ENCODE measurements at regions of chr3 and their contacts with region 1.

Region 1: DNA sequence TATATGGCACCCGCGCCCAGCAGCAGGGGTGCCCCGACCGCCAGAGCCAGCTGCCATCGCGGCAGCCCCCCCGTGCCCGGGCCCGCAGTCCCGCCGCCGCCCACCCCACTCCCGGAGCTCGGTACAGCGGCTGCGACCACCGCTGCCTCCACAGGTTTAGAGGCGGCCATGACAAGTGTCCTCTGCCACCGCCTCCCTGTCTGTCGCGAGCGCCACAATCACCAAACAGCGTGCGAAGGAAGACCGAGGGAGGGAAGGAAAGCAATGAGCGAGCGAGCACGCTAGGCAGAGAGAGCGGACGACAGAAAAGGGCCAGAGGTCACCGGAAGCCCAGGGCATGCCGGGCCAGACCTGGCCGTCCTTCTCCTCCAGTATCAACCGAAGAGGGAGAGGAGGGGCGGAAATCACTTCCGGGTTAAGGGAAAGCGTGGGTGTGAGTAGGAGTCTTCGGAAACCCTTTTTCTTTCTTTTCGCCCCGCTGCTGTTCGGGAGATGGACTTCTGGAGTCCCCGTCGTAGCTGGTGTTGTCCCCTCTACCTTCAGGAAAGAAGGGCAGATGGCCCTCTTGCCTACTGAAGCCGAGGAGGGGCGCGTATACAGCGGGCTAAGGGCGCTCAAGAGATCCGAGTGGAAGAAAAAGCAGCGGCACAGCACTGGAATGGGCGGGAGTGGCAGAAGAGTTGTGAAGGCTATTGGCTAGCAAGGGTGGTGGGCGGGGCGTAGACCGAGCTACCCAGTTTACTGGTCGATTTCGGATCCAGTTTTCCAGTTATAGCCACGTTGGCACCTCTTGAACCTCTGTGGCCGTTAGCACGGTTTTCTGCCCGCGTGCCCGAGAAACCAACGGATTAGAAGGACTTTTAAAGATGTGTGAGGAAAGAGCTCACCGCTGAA is at the starts of genes LNP1 and TOMM70:
- DNase-seq: peak; percentile 98 to 99
- ATAC-seq: peak; percentile 99
- H3K4me3 ChIP-seq: peak within 1 kb of the TSS; percentile 92 to 96
- H3K27ac ChIP-seq: peak within 1 kb of the TSS; percentile 34 to 92
- H3K4me1 ChIP-seq: no peaks in the 10 kb centered on the region
- H3K27me3 ChIP-seq: no peaks in the 10 kb centered on the region
- total RNA-seq, gene LNP1: 2.8 to 5.1 TPM
- total RNA-seq, gene TOMM70: 30.8 to 33.9 TPM

Region 2: GRCh38 chr3:98593046-98593936 is 1807.7 kb before region 1 on chr3 and contains the start of gene CPOX:
- intact Hi-C with region 1: loop called in 1 of 2 experiments (anchors 10 kb)
- DNase-seq: peak; percentile 95 to 96
- ATAC-seq: peak; percentile 97
- H3K4me3 ChIP-seq: peak within 1 kb of the TSS; percentile 70 to 90
- H3K27ac ChIP-seq: peak within 1 kb of the TSS; percentile 2 to 19
- H3K4me1 ChIP-seq: no peaks in the 10 kb centered on the region
- H3K27me3 ChIP-seq: no peaks in the 10 kb centered on the region
- total RNA-seq, gene CPOX: 10.8 to 19.4 TPM

Region 3: DNA sequence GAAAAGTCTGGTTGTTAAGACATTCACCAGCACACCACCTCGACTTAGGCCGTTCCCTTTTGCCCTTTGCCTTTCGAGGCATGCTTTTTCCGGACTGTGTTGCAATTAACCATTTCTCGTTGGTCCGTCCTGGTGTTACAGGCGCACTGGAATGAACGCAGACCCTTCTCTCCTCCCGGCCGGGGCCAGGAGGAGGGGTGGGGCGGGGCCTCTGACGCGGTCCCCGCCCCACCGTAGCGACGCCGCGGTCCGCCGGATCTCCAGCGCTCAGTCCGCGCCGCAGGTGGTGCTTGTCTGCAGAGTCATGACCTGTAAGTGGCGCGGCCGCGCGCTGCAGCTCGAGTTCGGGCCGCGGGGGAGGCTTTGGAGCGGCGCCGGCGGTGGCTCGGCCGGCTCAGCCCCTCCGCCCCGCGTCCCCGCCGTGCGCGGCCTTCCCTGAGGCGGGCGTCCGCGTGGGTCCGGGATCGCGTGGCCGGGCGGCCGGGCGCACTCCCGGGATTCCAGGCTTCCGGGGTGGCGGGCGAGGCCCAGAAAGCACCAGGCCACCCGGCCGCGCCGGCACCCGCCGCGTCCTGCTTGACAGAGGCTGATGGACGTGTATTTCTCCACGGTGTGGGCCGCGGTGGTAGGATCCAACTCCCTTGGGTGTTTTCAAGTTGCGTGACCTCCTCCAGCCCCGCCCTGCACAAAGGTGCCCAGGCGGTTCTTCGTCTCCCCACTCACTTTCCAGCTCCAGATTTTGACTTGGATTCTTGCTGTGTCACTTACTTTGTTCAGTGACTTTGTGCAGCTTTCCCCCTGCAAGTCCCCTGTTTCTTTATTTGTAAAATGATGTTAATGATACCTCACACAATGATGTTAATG is 66.3 kb before region 1 on chr3 and contains the start of gene NIT2:
- intact Hi-C with region 1: loop called in 1 of 2 experiments (anchors 10 kb)
- DNase-seq: peak; percentile 88 to 95
- ATAC-seq: peak; percentile 96
- H3K4me3 ChIP-seq: peak within 1 kb of the TSS; percentile 61 to 79
- H3K27ac ChIP-seq: peak within 1 kb of the TSS; percentile 14 to 77
- H3K4me1 ChIP-seq: no peaks in the 10 kb centered on the region
- H3K27me3 ChIP-seq: no peaks in the 10 kb centered on the region
- total RNA-seq, gene NIT2: 33.7 to 34.0 TPM

Region 4: DNA sequence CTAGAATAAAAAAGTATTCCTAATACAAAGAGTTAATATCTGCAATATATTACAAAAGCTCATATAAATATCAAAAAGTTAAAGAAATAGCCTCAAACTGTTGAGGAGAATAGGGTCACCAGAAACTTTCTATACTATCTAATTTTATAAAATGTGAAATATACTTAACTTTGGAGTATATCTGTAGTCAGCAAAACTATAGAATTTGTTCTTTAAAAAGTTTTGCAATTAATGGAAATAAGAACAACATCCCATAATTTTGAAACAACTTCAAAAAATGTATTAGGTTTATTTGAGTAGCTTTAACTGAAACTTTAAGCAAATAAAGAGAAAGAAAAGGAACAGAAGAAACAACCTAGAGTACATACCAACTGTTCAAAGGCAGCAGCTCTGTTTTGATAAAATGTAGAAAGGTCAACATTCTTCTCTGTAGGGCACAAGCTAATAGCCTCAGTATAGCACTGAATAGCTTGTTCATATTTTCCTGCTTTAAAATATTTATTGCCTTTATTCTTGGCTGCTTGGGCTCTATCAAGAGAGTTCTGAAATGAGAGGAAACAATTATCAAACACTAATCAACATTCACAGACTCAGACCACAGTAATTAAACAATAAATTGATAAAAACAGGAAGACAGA is 14.5 kb before region 1 on chr3:
- intact Hi-C with region 1: no loop called
- DNase-seq: no peak
- ATAC-seq: no peak
- H3K4me3 ChIP-seq: no peak overlapping the region
- H3K27ac ChIP-seq: no peak overlapping the region
- H3K4me1 ChIP-seq: peaks cover 0 to 3% of the 10 kb centered on the region in 2 donors
- H3K27me3 ChIP-seq: no peaks in the 10 kb centered on the region

Region 5: GRCh38 chr3:100492059-100493006 is 91.3 kb after region 1 on chr3 and contains the start of gene TMEM45A:
- intact Hi-C with region 1: loop called in 1 of 2 experiments (anchors 5 kb)
- DNase-seq: peak; percentile 97 to 99
- ATAC-seq: peak; percentile 100
- H3K4me3 ChIP-seq: peak within 1 kb of the TSS; percentile 48 to 88
- H3K27ac ChIP-seq: peak within 1 kb of the TSS in 1 of 2 donors; percentile 54
- H3K4me1 ChIP-seq: peaks cover 0 to 2% of the 10 kb centered on the region in 2 donors
- H3K27me3 ChIP-seq: no peaks in the 10 kb centered on the region
- total RNA-seq, gene TMEM45A: 39.2 to 47.5 TPM